Dorsolateral prefrontal cortex (tissue), 120 donors: ENCODE measurements at regions of chr2 and their contacts with region 1.

Region 1: GRCh38 chr2:134454931-134455330 is 201.1 kb downstream of the MGAT5 start:
- DNase-seq: peak in 1 of 10 donors; percentile 9
- H3K4me3 ChIP-seq: no peak overlapping the region
- H3K27ac ChIP-seq: no peak overlapping the region
- H3K27me3 ChIP-seq: no peaks in the 10 kb centered on the region
- CTCF ChIP-seq: no peak

Region 2: DNA sequence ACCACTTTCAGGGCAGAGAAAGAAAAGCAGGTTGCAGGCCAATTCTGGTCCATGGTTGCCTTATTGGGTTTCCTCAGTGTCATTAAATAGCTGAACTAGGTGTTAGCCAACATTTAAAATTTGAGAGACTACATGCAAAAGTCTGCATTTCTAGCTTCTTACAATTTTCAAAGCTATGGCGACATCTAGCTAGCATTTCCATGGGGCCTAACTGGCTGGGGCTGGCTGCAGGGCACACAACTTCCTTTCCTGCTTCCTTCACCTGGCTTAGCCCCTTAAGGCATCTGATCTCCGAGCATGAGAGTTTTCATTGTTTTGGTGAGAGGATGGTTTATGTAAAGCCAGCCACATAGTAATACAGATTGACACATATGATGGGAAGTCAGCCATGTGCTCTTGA is 1601.8 kb before region 1 on chr2:
- intact Hi-C with region 1: no loop called
- DNase-seq: no peak
- H3K4me3 ChIP-seq: no peak overlapping the region
- H3K27ac ChIP-seq: no peak overlapping the region
- H3K27me3 ChIP-seq: no peaks in the 10 kb centered on the region
- CTCF ChIP-seq: no peak

Region 3: GRCh38 chr2:133886735-133887660 is 567.9 kb before region 1 on chr2:
- intact Hi-C with region 1: loop called in 1 of 2 experiments (anchors 5 kb)
- DNase-seq: peak; percentile 49 to 91 (median 84)
- H3K4me3 ChIP-seq: peak overlapping the region in 17 of 59 donors; percentile 1 to 37 (median 21)
- H3K27ac ChIP-seq: peak overlapping the region in 1 of 59 donors; percentile 10
- H3K27me3 ChIP-seq: peaks cover 0 to 2% (median 0%) of the 10 kb centered on the region in 45 donors
- CTCF ChIP-seq: peak; percentile 55 to 83 (median 72)

Region 4: DNA sequence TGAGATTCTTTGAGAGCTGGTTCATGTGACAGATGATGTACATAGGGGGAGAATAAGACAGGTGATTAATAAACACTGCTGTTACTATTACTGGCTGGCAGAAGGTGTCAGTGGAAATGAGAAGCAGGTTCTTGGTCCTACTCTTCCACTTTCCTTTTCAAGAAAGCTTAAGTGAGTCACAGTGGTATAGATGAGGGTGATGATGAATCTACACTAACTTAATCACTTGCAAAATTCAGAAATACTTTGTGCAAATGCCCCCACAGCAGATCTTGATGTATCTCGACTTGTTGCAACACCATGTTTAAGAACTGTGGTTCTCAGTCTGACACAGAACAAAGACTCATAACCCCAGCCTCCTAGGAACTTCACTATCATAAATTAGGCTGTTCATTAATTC is 237.0 kb before region 1 on chr2:
- intact Hi-C with region 1: no loop called
- DNase-seq: no peak
- H3K4me3 ChIP-seq: no peak overlapping the region
- H3K27ac ChIP-seq: no peak overlapping the region
- H3K27me3 ChIP-seq: no peaks in the 10 kb centered on the region
- CTCF ChIP-seq: no peak

Region 5: GRCh38 chr2:134245340-134245984 is 209.5 kb before region 1 on chr2:
- intact Hi-C with region 1: loop called in 1 of 2 experiments (anchors 5 kb)
- DNase-seq: peak in 9 of 10 donors; percentile 60 to 92 (median 80)
- H3K4me3 ChIP-seq: no peak overlapping the region
- H3K27ac ChIP-seq: peak overlapping the region in 11 of 59 donors; percentile 6 to 69 (median 33)
- H3K27me3 ChIP-seq: no peaks in the 10 kb centered on the region
- CTCF ChIP-seq: peak; percentile 52 to 93 (median 80)

Region 6: DNA sequence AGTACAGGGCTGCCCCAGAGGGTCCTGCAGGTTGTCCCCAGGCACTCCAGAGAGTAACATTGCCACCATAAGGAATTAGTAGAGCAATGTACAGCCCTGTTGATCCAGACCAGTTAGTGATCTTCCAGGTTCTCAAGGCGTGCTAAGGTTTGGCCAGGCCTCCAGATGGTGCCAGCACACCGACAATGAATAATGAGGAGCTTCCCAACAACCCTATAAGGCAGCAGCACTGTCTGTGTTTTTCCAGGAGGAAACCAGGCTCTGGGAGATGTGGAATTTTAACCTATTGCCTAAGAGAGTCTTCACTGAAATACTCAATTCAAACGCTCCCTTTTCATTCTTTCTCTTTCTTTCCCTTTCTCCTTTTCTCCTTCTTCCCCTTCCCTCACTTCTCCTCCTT is 79.0 kb before region 1 on chr2:
- intact Hi-C with region 1: loop called (anchors 2 to 10 kb)
- DNase-seq: peak; percentile 42 to 79 (median 66)
- H3K4me3 ChIP-seq: peak overlapping the region in 1 of 59 donors; percentile 2
- H3K27ac ChIP-seq: peak overlapping the region in 43 of 59 donors; percentile 4 to 87 (median 50)
- H3K27me3 ChIP-seq: no peaks in the 10 kb centered on the region
- CTCF ChIP-seq: peak in 55 of 56 donors; percentile 23 to 78 (median 51)

Region 7: GRCh38 chr2:134402410-134402809 is 52.5 kb before region 1 on chr2:
- intact Hi-C with region 1: no loop called
- DNase-seq: no peak
- H3K4me3 ChIP-seq: no peak overlapping the region
- H3K27ac ChIP-seq: peak overlapping the region in 6 of 59 donors; percentile 3 to 69 (median 21)
- H3K27me3 ChIP-seq: no peaks in the 10 kb centered on the region
- CTCF ChIP-seq: no peak

Region 8: GRCh38 chr2:134657637-134658250 is 202.8 kb after region 1 on chr2:
- intact Hi-C with region 1: no loop called
- DNase-seq: no peak
- H3K4me3 ChIP-seq: no peak overlapping the region
- H3K27ac ChIP-seq: no peak overlapping the region
- H3K27me3 ChIP-seq: no peaks in the 10 kb centered on the region
- CTCF ChIP-seq: peak in 16 of 56 donors; percentile 10 to 27 (median 14)